ENCODE measurements at regions of chrX and their contacts with region 1.

Region 1: GRCh38 chrX:40169193-40170101 is 71.7 kb upstream of the BCOR start:
- DNase-seq: peak; percentile 93
- ATAC-seq: peak; percentile 66
- H3K4me3 ChIP-seq: peak overlapping the region in 4 of 5 experiments; percentile 12 to 34 (median 26)
- H3K4me3 Mint-ChIP-seq: peak overlapping the region; percentile 87
- H3K27ac ChIP-seq: peak overlapping the region; percentile 97 to 99
- H3K27ac Mint-ChIP-seq: peak overlapping the region; percentile 100
- H3K4me1 ChIP-seq: peaks cover 44 to 72% of the 10 kb centered on the region in 2 donors
- H3K4me1 Mint-ChIP-seq: peaks cover 58% of the 10 kb centered on the region
- H3K27me3 ChIP-seq: no peaks in the 10 kb centered on the region
- H3K27me3 Mint-ChIP-seq: no peaks in the 10 kb centered on the region
- CTCF ChIP-seq: peak; percentile 61

Region 2: GRCh38 chrX:38803586-38804431 is 1365.6 kb before region 1 on chrX:
- CTCF ChIA-PET with region 1: no interaction called
- POLR2A ChIA-PET with region 1: no interaction called
- intact Hi-C with region 1: loop called (anchors 10 kb)
- DNase-seq: peak; percentile 56
- ATAC-seq: peak; percentile 68
- H3K4me3 ChIP-seq: peak overlapping the region; percentile 41 to 69 (median 64)
- H3K4me3 Mint-ChIP-seq: peak overlapping the region; percentile 91
- H3K27ac ChIP-seq: peak overlapping the region; percentile 78 to 82
- H3K27ac Mint-ChIP-seq: peak overlapping the region; percentile 88
- H3K4me1 ChIP-seq: peaks cover 14 to 32% of the 10 kb centered on the region in 2 donors
- H3K4me1 Mint-ChIP-seq: peaks cover 35% of the 10 kb centered on the region
- H3K27me3 ChIP-seq: peaks cover 0 to 2% (median 0%) of the 10 kb centered on the region in 4 experiments
- H3K27me3 Mint-ChIP-seq: peaks cover 3% of the 10 kb centered on the region
- CTCF ChIP-seq: no peak

Region 3: DNA sequence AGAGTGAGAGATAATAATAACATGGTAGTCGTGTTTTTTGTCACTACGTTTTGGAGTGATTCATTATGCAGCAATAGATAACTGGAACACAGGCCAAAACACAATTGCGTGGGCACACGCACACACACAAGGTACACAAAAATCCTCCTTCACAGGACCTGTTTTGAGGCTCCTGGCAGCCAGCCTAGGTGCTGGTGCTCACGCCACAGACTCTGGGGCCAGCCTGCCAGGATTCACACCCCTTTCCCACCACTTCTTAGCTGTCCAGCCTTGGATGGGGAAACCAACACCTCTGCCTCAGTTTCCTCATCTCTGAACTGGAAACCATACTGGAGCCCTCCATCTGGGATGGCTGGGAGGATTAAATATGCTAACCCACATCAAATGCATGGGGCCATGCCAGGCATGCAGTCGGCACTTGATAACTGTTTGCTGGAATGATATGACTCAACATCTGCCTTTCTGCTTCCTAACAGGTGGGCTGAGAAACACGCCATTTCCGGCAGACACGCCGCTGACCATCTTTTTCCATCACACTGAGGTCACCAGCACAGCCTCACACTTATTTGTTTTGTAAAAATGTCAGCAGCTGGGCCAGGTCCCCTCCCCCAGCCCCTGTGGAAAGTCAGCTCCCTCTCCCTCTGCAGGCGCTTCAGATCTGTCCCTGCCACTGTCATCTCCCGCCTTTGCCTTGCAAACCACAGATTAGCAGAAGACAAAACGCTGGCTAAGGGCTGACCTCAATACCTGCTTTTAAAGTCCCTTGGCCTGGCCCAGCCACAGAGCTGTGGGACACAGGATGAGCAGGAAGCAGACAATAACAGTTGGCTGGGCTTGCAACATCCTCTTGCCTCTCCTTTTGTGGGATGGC is 309.2 kb before region 1 on chrX:
- CTCF ChIA-PET with region 1: interaction called, 4 read pairs
- POLR2A ChIA-PET with region 1: no interaction called
- intact Hi-C with region 1: loop called (anchors 5 kb)
- DNase-seq: peak; percentile 18
- ATAC-seq: peak; percentile 54
- H3K4me3 ChIP-seq: no peak overlapping the region
- H3K4me3 Mint-ChIP-seq: peak overlapping the region; percentile 50
- H3K27ac ChIP-seq: no peak overlapping the region
- H3K27ac Mint-ChIP-seq: peak overlapping the region; percentile 82
- H3K4me1 ChIP-seq: peaks cover 14 to 22% of the 10 kb centered on the region in 2 donors
- H3K4me1 Mint-ChIP-seq: peaks cover 30% of the 10 kb centered on the region
- H3K27me3 ChIP-seq: no peaks in the 10 kb centered on the region
- H3K27me3 Mint-ChIP-seq: no peaks in the 10 kb centered on the region
- CTCF ChIP-seq: no peak

Region 4: GRCh38 chrX:40013266-40014195 is 155.9 kb before region 1 on chrX:
- CTCF ChIA-PET with region 1: interaction called, 10 read pairs
- POLR2A ChIA-PET with region 1: interaction called, 6 read pairs
- intact Hi-C with region 1: loop called (anchors 2 kb)
- DNase-seq: peak; percentile 80
- ATAC-seq: peak; percentile 55
- H3K4me3 ChIP-seq: peak overlapping the region in 4 of 5 experiments; percentile 53 to 69 (median 56)
- H3K4me3 Mint-ChIP-seq: peak overlapping the region; percentile 85
- H3K27ac ChIP-seq: peak overlapping the region in 1 of 2 donors; percentile 36
- H3K27ac Mint-ChIP-seq: peak overlapping the region; percentile 71
- H3K4me1 ChIP-seq: peaks cover 43 to 52% of the 10 kb centered on the region in 2 donors
- H3K4me1 Mint-ChIP-seq: peaks cover 34% of the 10 kb centered on the region
- H3K27me3 ChIP-seq: peaks cover 0 to 10% (median under 1%) of the 10 kb centered on the region in 4 experiments
- H3K27me3 Mint-ChIP-seq: peaks cover 2% of the 10 kb centered on the region
- CTCF ChIP-seq: no peak

Region 5: GRCh38 chrX:40078489-40079227 is 90.8 kb before region 1 on chrX:
- CTCF ChIA-PET with region 1: no interaction called
- POLR2A ChIA-PET with region 1: no interaction called
- intact Hi-C with region 1: no loop called
- DNase-seq: no peak
- ATAC-seq: no peak
- H3K4me3 ChIP-seq: no peak overlapping the region
- H3K4me3 Mint-ChIP-seq: no peak overlapping the region
- H3K27ac ChIP-seq: no peak overlapping the region
- H3K27ac Mint-ChIP-seq: no peak overlapping the region
- H3K4me1 ChIP-seq: peaks cover 11 to 14% of the 10 kb centered on the region in 2 donors
- H3K4me1 Mint-ChIP-seq: peaks cover 16% of the 10 kb centered on the region
- H3K27me3 ChIP-seq: no peaks in the 10 kb centered on the region
- H3K27me3 Mint-ChIP-seq: no peaks in the 10 kb centered on the region
- CTCF ChIP-seq: no peak

Region 6: GRCh38 chrX:40153335-40154249 is 15.9 kb before region 1 on chrX:
- CTCF ChIA-PET with region 1: interaction called, 24 read pairs
- POLR2A ChIA-PET with region 1: interaction called, 24 read pairs
- intact Hi-C with region 1: loop called (anchors 1 kb)
- DNase-seq: peak; percentile 87
- ATAC-seq: peak; percentile 71
- H3K4me3 ChIP-seq: peak overlapping the region in 4 of 5 experiments; percentile 46 to 59 (median 54)
- H3K4me3 Mint-ChIP-seq: peak overlapping the region; percentile 89
- H3K27ac ChIP-seq: peak overlapping the region; percentile 9 to 50
- H3K27ac Mint-ChIP-seq: peak overlapping the region; percentile 88
- H3K4me1 ChIP-seq: peaks cover 41 to 63% of the 10 kb centered on the region in 2 donors
- H3K4me1 Mint-ChIP-seq: peaks cover 46% of the 10 kb centered on the region
- H3K27me3 ChIP-seq: no peaks in the 10 kb centered on the region
- H3K27me3 Mint-ChIP-seq: peaks cover 3% of the 10 kb centered on the region
- CTCF ChIP-seq: no peak

Region 7: GRCh38 chrX:40207626-40208025 is 38.2 kb after region 1 on chrX:
- CTCF ChIA-PET with region 1: no interaction called
- POLR2A ChIA-PET with region 1: interaction called, 7 read pairs
- intact Hi-C with region 1: loop called (anchors 5 kb)
- DNase-seq: no peak
- ATAC-seq: peak; percentile 17
- H3K4me3 ChIP-seq: no peak overlapping the region
- H3K4me3 Mint-ChIP-seq: no peak overlapping the region
- H3K27ac ChIP-seq: no peak overlapping the region
- H3K27ac Mint-ChIP-seq: no peak overlapping the region
- H3K4me1 ChIP-seq: peaks cover 14 to 19% of the 10 kb centered on the region in 2 donors
- H3K4me1 Mint-ChIP-seq: peaks cover 23% of the 10 kb centered on the region
- H3K27me3 ChIP-seq: no peaks in the 10 kb centered on the region
- H3K27me3 Mint-ChIP-seq: no peaks in the 10 kb centered on the region
- CTCF ChIP-seq: no peak

Region 8: GRCh38 chrX:40260146-40260747 is 90.8 kb after region 1 on chrX:
- CTCF ChIA-PET with region 1: no interaction called
- POLR2A ChIA-PET with region 1: no interaction called
- intact Hi-C with region 1: no loop called
- DNase-seq: no peak
- ATAC-seq: no peak
- H3K4me3 ChIP-seq: no peak overlapping the region
- H3K4me3 Mint-ChIP-seq: no peak overlapping the region
- H3K27ac ChIP-seq: no peak overlapping the region
- H3K27ac Mint-ChIP-seq: no peak overlapping the region
- H3K4me1 ChIP-seq: no peaks in the 10 kb centered on the region
- H3K4me1 Mint-ChIP-seq: no peaks in the 10 kb centered on the region
- H3K27me3 ChIP-seq: no peaks in the 10 kb centered on the region
- H3K27me3 Mint-ChIP-seq: no peaks in the 10 kb centered on the region
- CTCF ChIP-seq: no peak

Region 9: GRCh38 chrX:40735325-40736169 is 566.1 kb after region 1 on chrX and contains the start of gene MED14:
- CTCF ChIA-PET with region 1: no interaction called
- POLR2A ChIA-PET with region 1: no interaction called
- intact Hi-C with region 1: loop called (anchors 10 kb)
- DNase-seq: peak; percentile 94
- ATAC-seq: peak; percentile 84
- H3K4me3 ChIP-seq: peak within 1 kb of the TSS; percentile 64 to 93 (median 82)
- H3K4me3 Mint-ChIP-seq: peak within 1 kb of the TSS; percentile 91
- H3K27ac ChIP-seq: peak within 1 kb of the TSS; percentile 91 to 98
- H3K27ac Mint-ChIP-seq: peak within 1 kb of the TSS; percentile 98
- H3K4me1 ChIP-seq: peaks cover 25 to 31% of the 10 kb centered on the region in 2 donors
- H3K4me1 Mint-ChIP-seq: peaks cover 34% of the 10 kb centered on the region
- H3K27me3 ChIP-seq: peaks cover 0 to 2% (median 0%) of the 10 kb centered on the region in 4 experiments
- H3K27me3 Mint-ChIP-seq: no peaks in the 10 kb centered on the region
- CTCF ChIP-seq: peak; percentile 56
- total RNA-seq, gene MED14: 63.5 and 67.1 TPM in 2 replicates

Measured in B cell (primary cell).